ENCODE measurements at regions of chr1 and their contacts with region 1.

Region 1: DNA sequence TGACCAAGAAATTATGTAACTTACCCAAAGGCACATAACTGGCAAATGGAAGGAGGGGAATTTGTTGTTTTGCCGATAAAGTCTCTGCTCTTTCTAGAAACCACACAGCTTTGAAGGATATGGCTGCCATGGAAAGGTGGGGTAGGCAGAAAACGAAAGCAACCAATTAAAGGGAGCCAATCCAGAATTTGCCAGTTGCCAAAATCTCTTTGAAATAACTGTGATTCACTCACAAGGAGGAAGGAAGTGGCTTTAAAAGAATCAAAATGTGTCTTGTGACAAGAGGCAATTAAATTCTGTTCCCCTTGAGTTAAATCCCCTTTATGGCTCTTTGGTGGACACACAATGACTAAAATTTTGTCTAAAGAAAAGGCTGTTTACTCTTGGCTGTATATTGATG is 61.2 kb upstream of the CCDC190 start:
- DNase-seq: no peak
- ATAC-seq: no peak
- H3K4me3 ChIP-seq: no peak overlapping the region
- H3K27ac ChIP-seq: no peak overlapping the region
- H3K4me1 ChIP-seq: no peaks in the 10 kb centered on the region
- H3K27me3 ChIP-seq: no peaks in the 10 kb centered on the region

Region 2: DNA sequence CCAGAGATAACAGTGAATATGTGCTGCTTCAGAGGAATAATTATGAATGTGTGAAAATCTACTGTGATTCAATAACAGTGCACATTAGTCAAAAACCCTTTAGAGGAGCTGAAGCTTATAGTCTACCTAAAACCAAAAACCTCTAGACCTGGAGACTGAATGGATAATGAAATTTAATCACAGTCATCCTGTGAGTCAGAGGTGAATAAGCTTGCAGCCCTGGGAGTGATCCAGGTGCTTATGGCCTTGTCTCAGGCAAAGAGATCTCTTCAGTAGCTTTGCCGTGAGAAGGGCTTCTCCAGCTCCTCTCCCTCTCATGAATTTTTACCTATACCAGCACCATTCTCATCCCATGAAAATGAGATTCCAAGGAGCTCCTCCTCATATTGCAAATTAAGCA is 65.7 kb after region 1 on chr1:
- intact Hi-C with region 1: loop called in 1 of 4 experiments (anchors 10 kb)
- DNase-seq: no peak
- ATAC-seq: no peak
- H3K4me3 ChIP-seq: no peak overlapping the region
- H3K27ac ChIP-seq: no peak overlapping the region
- H3K4me1 ChIP-seq: no peaks in the 10 kb centered on the region
- H3K27me3 ChIP-seq: no peaks in the 10 kb centered on the region

Measured in right cardiac atrium (tissue), 5 donors.